Aorta (tissue), 5 donors: ENCODE measurements at regions of chr11 and their contacts with region 1.

Region 1: GRCh38 chr11:112795142-112795815 is 165.9 kb upstream of the NCAM1 start:
- DNase-seq: peak in 1 of 2 donors; percentile 62
- ATAC-seq: no peak
- H3K4me3 ChIP-seq: no peak overlapping the region
- H3K27ac ChIP-seq: peak overlapping the region; percentile 29 to 79
- H3K4me1 ChIP-seq: no peaks in the 10 kb centered on the region
- H3K27me3 ChIP-seq: no peaks in the 10 kb centered on the region

Region 2: DNA sequence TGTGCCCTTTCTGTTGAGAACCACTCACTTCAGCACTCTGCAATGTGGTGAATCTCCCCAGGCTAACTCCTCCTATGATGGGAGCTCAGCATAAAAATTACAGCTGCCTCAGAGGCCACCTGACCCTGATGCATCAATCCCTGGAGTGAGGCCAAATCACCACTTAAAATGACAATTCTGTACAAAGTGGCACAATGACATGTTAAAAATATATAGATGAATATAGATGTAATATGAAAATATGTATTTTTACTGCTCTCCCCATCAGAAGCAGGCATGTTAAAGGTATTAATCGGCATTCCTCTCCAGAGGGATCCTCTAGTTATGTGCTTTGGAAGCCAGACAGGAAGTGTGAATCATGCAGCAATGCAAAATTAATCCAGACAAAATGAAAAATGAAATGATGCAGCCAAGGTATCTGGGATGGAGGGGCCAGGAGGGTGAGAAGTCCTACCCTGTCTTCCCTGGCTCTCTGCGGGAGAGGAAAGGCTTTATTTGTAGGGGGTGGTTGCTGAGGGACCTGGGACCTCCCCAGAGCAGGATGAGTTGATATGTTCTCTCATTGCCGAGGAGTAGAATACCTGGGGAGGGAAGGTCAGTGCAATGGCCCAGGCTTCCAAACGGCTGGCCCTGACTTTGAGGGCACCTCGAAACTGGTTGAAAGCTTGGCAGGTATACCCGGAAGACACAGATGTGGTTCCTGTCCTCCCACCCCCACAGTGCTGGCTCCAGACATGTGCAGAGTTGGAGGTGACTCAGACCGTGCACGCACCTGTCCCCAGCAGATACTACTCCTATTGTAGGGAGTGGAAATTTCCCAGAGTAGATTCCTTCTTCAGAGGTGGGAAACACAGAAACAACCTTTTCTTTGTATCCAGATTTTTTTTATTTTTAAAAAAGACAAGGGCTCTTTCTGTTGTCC is 182.0 kb before region 1 on chr11:
- intact Hi-C with region 1: loop called in 1 of 2 experiments (anchors 5 kb)
- DNase-seq: no peak
- ATAC-seq: peak; percentile 44
- H3K4me3 ChIP-seq: no peak overlapping the region
- H3K27ac ChIP-seq: no peak overlapping the region
- H3K4me1 ChIP-seq: peaks cover 0 to 16% of the 10 kb centered on the region in 2 donors
- H3K27me3 ChIP-seq: no peaks in the 10 kb centered on the region

Region 3: GRCh38 chr11:112961146-112961668 is 165.9 kb after region 1 on chr11 and contains the start of gene NCAM1:
- intact Hi-C with region 1: loop called in 1 of 2 experiments (anchors 10 kb)
- DNase-seq: peak; percentile 59 to 82
- ATAC-seq: peak; percentile 62
- H3K4me3 ChIP-seq: peak within 1 kb of the TSS; percentile 58 to 72
- H3K27ac ChIP-seq: no peak within 1 kb of the TSS
- H3K4me1 ChIP-seq: no peaks in the 10 kb centered on the region
- H3K27me3 ChIP-seq: no peaks in the 10 kb centered on the region
- total RNA-seq, gene NCAM1: 10.2 to 19.4 TPM

Region 4: DNA sequence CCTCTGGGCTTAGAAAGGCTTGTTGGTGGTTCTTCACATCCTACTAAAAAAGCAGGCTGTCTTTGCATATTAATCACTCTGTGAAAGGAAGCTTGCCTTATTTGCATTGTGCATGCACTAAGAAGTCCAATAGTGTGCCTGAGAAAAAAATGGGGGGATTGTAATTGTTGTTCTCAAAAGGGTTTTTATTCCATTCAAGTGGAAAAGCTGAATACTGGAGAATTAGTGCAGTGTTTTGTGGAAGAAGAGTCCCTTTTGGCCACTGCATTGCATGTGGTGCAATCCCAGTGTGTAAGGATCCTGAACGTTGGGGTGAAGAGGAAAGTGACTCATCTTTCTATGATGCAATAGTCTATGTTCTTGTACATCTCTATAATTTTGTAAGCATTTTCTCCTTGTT is 182.5 kb after region 1 on chr11:
- intact Hi-C with region 1: no loop called
- DNase-seq: no peak
- ATAC-seq: peak; percentile 66
- H3K4me3 ChIP-seq: no peak overlapping the region
- H3K27ac ChIP-seq: no peak overlapping the region
- H3K4me1 ChIP-seq: peaks cover 0 to 4% of the 10 kb centered on the region in 2 donors
- H3K27me3 ChIP-seq: no peaks in the 10 kb centered on the region

Region 5: GRCh38 chr11:113113801-113114706 is 318.8 kb after region 1 on chr11:
- intact Hi-C with region 1: loop called in 1 of 2 experiments (anchors 5 kb)
- DNase-seq: peak; percentile 65 to 77
- ATAC-seq: peak; percentile 89
- H3K4me3 ChIP-seq: peak overlapping the region in 1 of 2 donors; percentile 5
- H3K27ac ChIP-seq: peak overlapping the region; percentile 71 to 93
- H3K4me1 ChIP-seq: peaks cover 4 to 7% of the 10 kb centered on the region in 2 donors
- H3K27me3 ChIP-seq: no peaks in the 10 kb centered on the region